Activated T-helper 1 cell treated with anti-CD3 and anti-CD28 coated beads, Interleukin-12 subunit alpha, Interleukin-12 subunit beta, Interleukin-2, Interleukin-4 antibody, amounts not matched to agents 30 ng/mL and 10 ng/mL and 1 ng/mL, durations not matched to agents 14 hours and 24 hours and 36 hours (primary cell): ENCODE measurements at regions of chr7 and their contacts with region 1.

Region 1: DNA sequence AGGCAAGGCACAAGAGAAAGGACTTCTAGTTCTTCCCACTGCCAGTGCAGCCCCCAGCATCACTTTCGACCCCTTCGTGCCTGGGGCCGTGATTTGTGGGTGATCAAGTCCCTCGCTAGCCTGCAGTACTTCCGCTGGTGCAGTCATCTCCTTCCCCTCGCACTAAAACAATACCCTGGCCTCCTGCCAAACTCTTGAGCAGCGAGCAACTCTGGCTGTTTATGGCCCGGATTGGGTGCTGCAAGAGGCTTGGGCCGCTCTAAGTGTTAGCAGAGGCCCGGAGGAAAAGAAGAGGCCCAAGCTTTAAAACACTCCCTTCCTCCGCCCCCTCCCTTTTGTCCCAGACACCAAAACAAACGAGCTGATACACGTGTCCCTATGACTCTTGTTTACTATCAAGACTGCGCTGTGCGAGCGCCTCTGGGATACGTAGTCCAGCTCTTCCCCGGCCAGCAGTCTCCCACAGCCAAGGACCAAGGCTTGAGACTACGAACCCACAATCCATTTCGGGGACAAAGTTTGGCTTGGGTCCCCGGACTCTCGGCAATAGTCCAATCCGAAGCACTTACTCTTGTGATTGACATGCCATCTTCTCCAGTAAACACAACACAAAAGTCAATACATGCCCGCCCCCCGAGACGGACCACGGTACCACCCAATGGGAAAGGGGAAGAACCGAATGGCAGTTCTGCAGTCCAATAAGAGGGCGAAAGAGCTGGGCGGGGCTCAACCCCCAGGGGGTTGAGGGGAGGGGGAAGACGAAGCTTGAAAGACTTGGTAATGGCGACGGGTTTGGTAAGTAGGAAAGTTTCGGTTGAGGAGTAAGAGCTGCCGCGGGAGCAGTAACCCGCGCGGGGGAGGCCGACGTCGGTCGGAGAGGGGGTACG is at the start of gene HBP1:
- DNase-seq: peak; percentile 97
- H3K4me3 Mint-ChIP-seq: peak within 1 kb of the TSS; percentile 88
- H3K27ac Mint-ChIP-seq: peak within 1 kb of the TSS; percentile 97
- H3K4me1 Mint-ChIP-seq: peaks cover 26% of the 10 kb centered on the region
- H3K27me3 Mint-ChIP-seq: peaks cover 10% of the 10 kb centered on the region
- total RNA-seq, gene HBP1: 15.2 and 16.6 TPM in 2 replicates

Region 2: GRCh38 chr7:105531792-105532671 is 1636.4 kb before region 1 on chr7 and contains the start of gene RINT1:
- intact Hi-C with region 1: loop called (anchors 5 kb)
- DNase-seq: peak; percentile 85
- H3K4me3 Mint-ChIP-seq: peak within 1 kb of the TSS; percentile 93
- H3K27ac Mint-ChIP-seq: peak within 1 kb of the TSS; percentile 95
- H3K4me1 Mint-ChIP-seq: peaks cover 21% of the 10 kb centered on the region
- H3K27me3 Mint-ChIP-seq: peaks cover 1% of the 10 kb centered on the region
- total RNA-seq, gene RINT1: 21.9 and 32.5 TPM in 2 replicates

Region 3: GRCh38 chr7:106425017-106425719 is 743.3 kb before region 1 on chr7:
- intact Hi-C with region 1: loop called (anchors 5 kb)
- DNase-seq: peak; percentile 67
- H3K4me3 Mint-ChIP-seq: peak overlapping the region; percentile 67
- H3K27ac Mint-ChIP-seq: peak overlapping the region; percentile 97
- H3K4me1 Mint-ChIP-seq: peaks cover 91% of the 10 kb centered on the region
- H3K27me3 Mint-ChIP-seq: no peaks in the 10 kb centered on the region

Region 4: GRCh38 chr7:106757846-106758245 is 410.6 kb before region 1 on chr7:
- intact Hi-C with region 1: no loop called
- DNase-seq: no peak
- H3K4me3 Mint-ChIP-seq: no peak overlapping the region
- H3K27ac Mint-ChIP-seq: no peak overlapping the region
- H3K4me1 Mint-ChIP-seq: no peaks in the 10 kb centered on the region
- H3K27me3 Mint-ChIP-seq: peaks cover 4% of the 10 kb centered on the region

Region 5: GRCh38 chr7:106848851-106849442 is 319.5 kb before region 1 on chr7:
- intact Hi-C with region 1: no loop called
- DNase-seq: no peak
- H3K4me3 Mint-ChIP-seq: no peak overlapping the region
- H3K27ac Mint-ChIP-seq: no peak overlapping the region
- H3K4me1 Mint-ChIP-seq: peaks cover 4% of the 10 kb centered on the region
- H3K27me3 Mint-ChIP-seq: peaks cover 6% of the 10 kb centered on the region

Region 6: GRCh38 chr7:106865130-106866041 is 303.1 kb before region 1 on chr7 and contains the start of gene PIK3CG:
- intact Hi-C with region 1: loop called (anchors 1 kb)
- DNase-seq: peak; percentile 22
- H3K4me3 Mint-ChIP-seq: peak within 1 kb of the TSS; percentile 96
- H3K27ac Mint-ChIP-seq: peak within 1 kb of the TSS; percentile 90
- H3K4me1 Mint-ChIP-seq: peaks cover 55% of the 10 kb centered on the region
- H3K27me3 Mint-ChIP-seq: no peaks in the 10 kb centered on the region
- total RNA-seq, gene PIK3CG: 38.7 and 39.3 TPM in 2 replicates

Region 7: DNA sequence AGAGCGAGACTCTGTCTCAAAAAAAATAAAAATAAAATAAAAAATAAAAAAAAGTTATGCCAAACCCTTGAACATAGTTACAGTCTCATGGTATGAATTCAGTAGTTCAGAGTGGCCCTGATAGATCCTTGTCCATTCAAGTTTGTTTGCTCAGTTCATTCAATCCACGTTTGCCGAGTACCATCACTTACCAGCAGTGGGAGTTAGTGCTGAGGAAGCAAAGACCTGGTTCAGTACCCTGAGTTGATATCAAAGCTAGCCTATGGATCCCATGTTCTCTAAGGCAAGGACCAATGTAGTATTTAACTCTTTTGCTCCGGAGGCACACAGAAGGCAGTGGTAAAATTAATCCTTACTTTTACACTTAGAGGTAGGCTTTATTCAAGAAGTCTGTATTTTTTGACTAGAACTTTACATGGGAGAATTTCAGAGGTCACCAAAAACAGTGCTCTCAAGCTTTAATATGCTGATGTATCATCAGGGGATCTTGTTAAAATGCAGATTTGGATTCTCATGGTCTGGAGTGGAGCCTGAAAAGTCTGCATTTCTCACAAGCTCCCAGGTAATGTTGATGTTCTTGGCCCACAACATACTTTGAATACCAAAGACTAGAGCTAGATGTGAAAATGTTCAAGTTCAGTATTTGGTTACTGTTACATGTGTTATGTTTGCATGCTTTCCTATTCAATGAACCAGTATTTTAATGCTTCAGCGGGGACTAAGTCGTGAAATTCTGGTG is 37.8 kb before region 1 on chr7:
- intact Hi-C with region 1: loop called (anchors 1 kb)
- DNase-seq: no peak
- H3K4me3 Mint-ChIP-seq: no peak overlapping the region
- H3K27ac Mint-ChIP-seq: no peak overlapping the region
- H3K4me1 Mint-ChIP-seq: peaks cover 14% of the 10 kb centered on the region
- H3K27me3 Mint-ChIP-seq: peaks cover 10% of the 10 kb centered on the region

Region 8: DNA sequence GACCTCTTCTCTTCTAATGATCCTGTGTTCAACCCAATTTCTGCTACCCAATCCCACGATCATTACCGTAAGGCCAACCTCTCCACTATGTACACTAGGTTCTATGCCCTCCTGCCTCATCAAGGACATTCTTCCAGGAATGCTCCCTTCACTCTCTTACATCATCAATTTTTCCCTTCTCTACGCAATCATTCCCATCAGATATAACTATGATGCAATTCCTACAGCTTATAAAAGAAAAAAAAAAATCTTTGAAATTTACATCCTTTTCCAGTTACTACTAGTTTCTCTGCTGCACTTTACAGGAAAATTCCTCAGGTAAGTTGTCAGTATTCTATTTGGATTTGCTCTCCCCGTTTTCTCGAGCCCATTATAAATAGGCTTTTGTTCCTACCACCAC is 270.6 kb after region 1 on chr7:
- intact Hi-C with region 1: no loop called
- DNase-seq: no peak
- H3K4me3 Mint-ChIP-seq: no peak overlapping the region
- H3K27ac Mint-ChIP-seq: no peak overlapping the region
- H3K4me1 Mint-ChIP-seq: no peaks in the 10 kb centered on the region
- H3K27me3 Mint-ChIP-seq: no peaks in the 10 kb centered on the region

Region 9: DNA sequence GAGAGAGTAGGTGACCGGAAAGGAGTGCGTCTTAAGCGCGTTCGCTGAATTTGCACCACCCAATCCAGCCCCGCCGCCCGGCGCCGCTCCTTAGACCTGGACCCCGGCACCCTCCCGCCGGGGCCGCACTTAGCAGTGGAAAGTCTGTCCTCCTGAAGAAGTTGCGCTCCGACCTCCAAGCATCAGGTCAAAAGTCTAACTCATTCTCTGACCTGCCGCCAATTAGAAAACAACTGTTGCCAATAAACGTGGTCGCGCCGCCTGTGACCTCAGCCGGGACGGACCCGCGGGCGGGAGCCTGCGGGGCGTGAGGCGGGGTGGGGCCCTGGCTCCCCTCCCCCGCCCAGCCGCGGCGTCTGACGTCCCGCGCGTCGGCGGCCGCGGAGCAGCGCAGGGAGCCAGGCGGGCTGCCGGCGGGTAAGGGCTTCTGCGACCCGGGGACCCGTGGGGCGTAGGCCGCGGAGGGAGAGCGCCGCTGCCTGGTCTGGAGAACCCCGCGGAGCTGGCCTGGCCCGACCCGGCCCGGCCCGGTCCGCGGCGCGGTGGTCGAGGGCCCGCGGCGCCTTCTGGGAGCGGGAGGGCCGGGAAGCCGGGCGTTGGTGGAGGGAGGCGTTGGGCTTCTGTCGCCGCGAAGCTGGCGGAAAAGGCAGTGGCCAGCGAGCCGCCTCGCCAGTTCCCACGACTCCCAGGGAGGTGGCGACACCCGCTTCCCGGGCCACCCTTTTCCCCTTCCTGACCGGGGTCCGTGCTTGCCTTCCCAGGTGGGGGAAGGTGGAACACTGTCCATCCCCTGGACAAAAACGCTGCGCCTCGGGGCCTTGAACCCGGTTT is 411.6 kb after region 1 on chr7 and contains the start of gene BCAP29:
- intact Hi-C with region 1: loop called (anchors 5 kb)
- DNase-seq: peak; percentile 65
- H3K4me3 Mint-ChIP-seq: peak within 1 kb of the TSS; percentile 89
- H3K27ac Mint-ChIP-seq: peak within 1 kb of the TSS; percentile 86
- H3K4me1 Mint-ChIP-seq: peaks cover 26% of the 10 kb centered on the region
- H3K27me3 Mint-ChIP-seq: no peaks in the 10 kb centered on the region
- total RNA-seq, gene BCAP29: 43.5 and 44.5 TPM in 2 replicates

Region 10: GRCh38 chr7:107879400-107880035 is 711.0 kb after region 1 on chr7:
- intact Hi-C with region 1: loop called (anchors 5 kb)
- DNase-seq: no peak
- H3K4me3 Mint-ChIP-seq: no peak overlapping the region
- H3K27ac Mint-ChIP-seq: no peak overlapping the region
- H3K4me1 Mint-ChIP-seq: peaks cover 10% of the 10 kb centered on the region
- H3K27me3 Mint-ChIP-seq: peaks cover 8% of the 10 kb centered on the region